Left ventricle myocardium superior (tissue), 1 donor: ENCODE measurements at regions of chrX and their contacts with region 1.

Region 1: DNA sequence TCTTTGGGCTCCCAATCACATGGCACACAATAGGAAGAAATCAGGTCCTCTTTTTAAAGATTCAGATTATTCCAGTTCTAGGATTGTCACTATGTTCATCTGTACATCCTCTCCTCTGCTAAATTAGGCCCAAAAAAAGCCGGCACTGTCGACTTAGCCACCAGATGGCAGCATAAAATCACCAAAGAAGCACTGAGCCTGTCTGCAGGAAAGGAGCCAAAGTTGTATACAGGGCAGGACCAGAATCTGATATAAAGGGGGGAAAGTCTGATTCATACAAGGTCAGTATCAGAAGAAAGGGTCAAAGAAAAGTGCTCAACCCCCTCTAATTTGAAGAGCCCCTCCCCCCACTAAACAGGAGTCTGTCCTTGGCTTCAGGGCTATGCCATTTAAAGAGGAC is 292.5 kb downstream of the CHIC1 start:
- DNase-seq: peak; percentile 40
- ATAC-seq: peak; percentile 68

Region 2: GRCh38 chrX:73668779-73669178 is 186.8 kb before region 1 on chrX:
- intact Hi-C with region 1: no loop called
- DNase-seq: peak; percentile 55
- ATAC-seq: peak; percentile 74

Region 3: DNA sequence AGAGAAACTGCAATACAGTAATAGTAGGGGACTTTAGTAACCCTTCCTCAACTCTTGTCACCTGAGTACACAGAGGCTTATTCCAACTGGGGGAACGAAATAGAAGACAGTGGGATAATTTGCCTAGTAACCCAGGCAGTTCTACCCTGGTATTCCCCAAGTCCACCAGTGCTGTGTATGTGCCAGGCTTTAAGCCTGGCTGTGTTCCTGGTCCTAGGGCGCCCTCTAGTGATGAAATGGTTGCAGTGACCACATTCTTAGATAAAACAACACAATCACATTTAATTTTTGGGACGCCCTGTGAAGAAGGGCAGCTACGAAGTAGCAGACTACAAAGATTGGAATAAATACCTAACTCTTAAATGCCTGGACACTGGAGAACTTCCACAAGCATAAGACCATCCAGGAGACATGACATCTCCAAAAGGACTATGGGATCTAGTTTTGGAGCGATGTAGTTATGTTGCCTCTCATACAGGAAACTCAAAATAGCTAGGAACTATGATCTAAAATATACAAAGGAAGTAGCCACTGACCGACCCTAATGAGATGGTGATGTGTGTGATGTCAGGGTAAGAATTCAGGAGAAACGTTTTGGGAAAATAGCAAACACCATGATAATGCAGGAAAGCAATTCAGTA is 160.0 kb after region 1 on chrX:
- intact Hi-C with region 1: loop called (anchors 5 kb)
- DNase-seq: peak; percentile 28
- ATAC-seq: peak; percentile 62